ENCODE measurements at regions of chr2 and their contacts with region 1.

Region 1: GRCh38 chr2:239288951-239289511 is 111.8 kb downstream of the HDAC4 start:
- DNase-seq: peak; percentile 61 to 76 (median 64)
- H3K4me3 ChIP-seq: peak overlapping the region in 1 of 2 donors; percentile 29
- H3K4me3 Mint-ChIP-seq: peak overlapping the region; percentile 63 to 86 (median 81)
- H3K27ac ChIP-seq: peak overlapping the region; percentile 54
- H3K27ac Mint-ChIP-seq: peak overlapping the region; percentile 86 to 99 (median 95)
- H3K4me1 ChIP-seq: peaks cover 81% of the 10 kb centered on the region
- H3K4me1 Mint-ChIP-seq: peaks cover 53 to 84% (median 68%) of the 10 kb centered on the region in 4 donors
- H3K27me3 ChIP-seq: no peaks in the 10 kb centered on the region
- H3K27me3 Mint-ChIP-seq: no peaks in the 10 kb centered on the region

Region 2: DNA sequence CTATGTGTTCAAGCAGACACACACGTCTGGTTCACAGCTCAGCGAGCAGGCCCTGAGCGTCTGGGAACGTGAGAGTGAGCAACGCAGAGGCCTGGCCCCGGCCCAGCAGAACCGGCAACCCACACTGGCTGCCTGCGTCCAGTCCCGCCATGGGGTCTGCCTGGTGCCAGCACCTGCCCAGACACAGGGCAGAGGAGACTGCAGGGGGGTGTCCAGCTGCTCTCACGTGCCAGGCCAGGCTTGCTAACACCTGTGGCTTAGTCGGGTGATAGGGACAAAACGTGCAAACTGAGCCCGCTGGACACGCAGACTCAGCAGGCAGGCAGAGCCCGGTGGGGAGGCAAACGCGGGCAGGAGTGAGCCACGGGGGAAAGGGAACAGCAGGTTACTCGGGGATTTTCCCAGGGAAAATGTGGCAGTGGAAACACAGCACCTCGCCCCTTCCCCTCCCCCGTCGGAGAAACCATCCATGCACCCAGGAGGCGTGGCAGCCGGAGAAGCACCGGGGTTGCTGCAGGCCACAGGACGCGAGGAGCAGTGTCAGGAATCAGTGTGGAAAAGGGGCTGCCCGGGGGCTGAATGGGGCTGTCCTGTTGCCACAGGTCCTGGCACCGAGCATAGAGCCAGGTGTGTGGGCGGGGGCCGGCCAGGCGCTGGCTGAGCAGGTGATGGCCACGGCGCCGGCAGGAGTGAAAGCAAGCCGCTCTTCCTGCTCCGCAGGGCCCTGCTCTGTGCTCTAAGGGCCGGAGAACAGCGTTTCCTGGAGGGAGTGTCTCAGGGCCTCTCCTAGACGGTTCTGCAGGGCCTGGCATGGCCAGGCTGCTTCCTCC is 42.9 kb before region 1 on chr2:
- CTCF ChIA-PET with region 1: no interaction called
- POLR2A ChIA-PET with region 1: no interaction called
- intact Hi-C with region 1: no loop called
- DNase-seq: no peak
- H3K4me3 ChIP-seq: no peak overlapping the region
- H3K4me3 Mint-ChIP-seq: no peak overlapping the region
- H3K27ac ChIP-seq: no peak overlapping the region
- H3K27ac Mint-ChIP-seq: peak overlapping the region in 1 of 7 donors; percentile 48
- H3K4me1 ChIP-seq: peaks cover 12% of the 10 kb centered on the region
- H3K4me1 Mint-ChIP-seq: peaks cover 27 to 78% (median 51%) of the 10 kb centered on the region in 4 donors
- H3K27me3 ChIP-seq: no peaks in the 10 kb centered on the region
- H3K27me3 Mint-ChIP-seq: no peaks in the 10 kb centered on the region

Region 3: GRCh38 chr2:239318790-239319661 is 30.0 kb after region 1 on chr2:
- CTCF ChIA-PET with region 1: no interaction called
- POLR2A ChIA-PET with region 1: interaction called, 14 read pairs
- intact Hi-C with region 1: no loop called
- DNase-seq: no peak
- H3K4me3 ChIP-seq: peak overlapping the region in 1 of 2 donors; percentile 28
- H3K4me3 Mint-ChIP-seq: peak overlapping the region; percentile 73 to 93 (median 80)
- H3K27ac ChIP-seq: peak overlapping the region; percentile 49
- H3K27ac Mint-ChIP-seq: peak overlapping the region; percentile 81 to 96 (median 94)
- H3K4me1 ChIP-seq: peaks cover 44% of the 10 kb centered on the region
- H3K4me1 Mint-ChIP-seq: peaks cover 42 to 78% (median 55%) of the 10 kb centered on the region in 4 donors
- H3K27me3 ChIP-seq: no peaks in the 10 kb centered on the region
- H3K27me3 Mint-ChIP-seq: no peaks in the 10 kb centered on the region

Region 4: GRCh38 chr2:239326831-239327535 is 38.0 kb after region 1 on chr2:
- CTCF ChIA-PET with region 1: no interaction called
- POLR2A ChIA-PET with region 1: interaction called, 14 read pairs
- intact Hi-C with region 1: loop called (anchors 5 kb)
- DNase-seq: peak; percentile 65 to 89 (median 70)
- H3K4me3 ChIP-seq: no peak overlapping the region
- H3K4me3 Mint-ChIP-seq: peak overlapping the region in 7 of 8 donors; percentile 46 to 76 (median 59)
- H3K27ac ChIP-seq: peak overlapping the region; percentile 46
- H3K27ac Mint-ChIP-seq: peak overlapping the region; percentile 89 to 96 (median 95)
- H3K4me1 ChIP-seq: peaks cover 61% of the 10 kb centered on the region
- H3K4me1 Mint-ChIP-seq: peaks cover 43 to 79% (median 59%) of the 10 kb centered on the region in 4 donors
- H3K27me3 ChIP-seq: no peaks in the 10 kb centered on the region
- H3K27me3 Mint-ChIP-seq: no peaks in the 10 kb centered on the region

Measured in CD4-positive, alpha-beta memory T cell (primary cell).